HEK293 (cell line): ENCODE measurements at regions of chr6 and their contacts with region 1.

Region 1: GRCh38 chr6:27772261-27773001 is 139.8 kb downstream of the OR2B2 start:
- H3K4me3 ChIP-seq: peak overlapping the region; percentile 21
- H3K27ac ChIP-seq: peak overlapping the region; percentile 40
- H3K4me1 ChIP-seq: no peaks in the 10 kb centered on the region
- CTCF ChIP-seq: peak; percentile 95

Region 2: DNA sequence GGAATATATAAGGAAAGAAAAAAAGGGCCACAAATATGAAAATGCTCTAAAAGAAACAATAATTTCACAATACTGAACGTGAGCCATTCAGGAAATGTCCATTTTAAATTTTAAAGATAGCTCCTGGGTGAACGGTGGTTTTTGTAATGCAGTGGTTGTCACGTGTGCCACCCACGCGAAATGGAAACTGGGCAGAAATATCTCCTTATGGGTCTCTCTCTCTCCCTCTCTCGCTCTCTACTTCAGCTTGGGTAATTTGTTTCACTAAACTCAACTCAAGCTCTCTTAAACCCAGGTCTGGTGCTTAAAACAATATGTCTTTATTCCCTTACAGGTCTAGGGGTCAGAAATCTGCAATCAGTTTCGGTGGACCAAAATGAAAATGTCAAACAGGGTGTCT is 11.0 kb before region 1 on chr6:
- CTCF ChIA-PET with region 1: interaction called, 62 read pairs
- POLR2A ChIA-PET with region 1: interaction called, 7 read pairs
- H3K4me3 ChIP-seq: no peak overlapping the region
- H3K27ac ChIP-seq: no peak overlapping the region
- H3K4me1 ChIP-seq: no peaks in the 10 kb centered on the region
- CTCF ChIP-seq: no peak

Region 3: GRCh38 chr6:27782748-27783147 is 10.3 kb after region 1 on chr6:
- CTCF ChIA-PET with region 1: interaction called, 31 read pairs
- POLR2A ChIA-PET with region 1: interaction called, 6 read pairs
- H3K4me3 ChIP-seq: no peak overlapping the region
- H3K27ac ChIP-seq: no peak overlapping the region
- H3K4me1 ChIP-seq: no peaks in the 10 kb centered on the region
- CTCF ChIP-seq: no peak

Region 4: GRCh38 chr6:27854421-27854820 is 82.0 kb after region 1 on chr6:
- CTCF ChIA-PET with region 1: no interaction called
- POLR2A ChIA-PET with region 1: no interaction called
- H3K4me3 ChIP-seq: no peak overlapping the region
- H3K27ac ChIP-seq: no peak overlapping the region
- H3K4me1 ChIP-seq: no peaks in the 10 kb centered on the region
- CTCF ChIP-seq: no peak

Region 5: DNA sequence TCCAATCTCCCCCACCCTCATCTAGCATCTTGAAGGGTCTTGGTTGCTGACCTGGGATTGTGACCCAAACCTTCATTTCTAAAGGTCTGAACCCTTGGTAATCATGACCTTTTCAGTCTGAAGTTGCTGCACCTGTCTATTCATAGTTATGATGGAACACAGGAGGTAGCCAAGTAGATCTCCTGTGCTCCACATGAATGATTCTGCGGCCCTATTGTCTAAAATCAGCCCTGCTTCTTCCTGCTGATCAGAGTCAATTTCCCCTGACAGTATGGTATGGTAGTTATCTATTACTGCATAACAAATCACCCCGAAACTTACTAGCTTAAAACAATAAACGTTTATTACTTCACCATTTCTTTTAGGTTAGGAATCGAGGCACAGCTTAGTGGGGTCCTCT is 193.6 kb after region 1 on chr6:
- CTCF ChIA-PET with region 1: no interaction called
- POLR2A ChIA-PET with region 1: no interaction called
- H3K4me3 ChIP-seq: no peak overlapping the region
- H3K27ac ChIP-seq: no peak overlapping the region
- H3K4me1 ChIP-seq: no peaks in the 10 kb centered on the region
- CTCF ChIP-seq: no peak